Gastrocnemius medialis (tissue), 4 donors: ENCODE measurements at regions of chr14 and their contacts with region 1.

Region 1: GRCh38 chr14:88013750-88014349 is 8.9 kb downstream of the GPR65 start:
- DNase-seq: peak; percentile 29 to 53
- ATAC-seq: peak; percentile 78 to 90
- H3K4me3 ChIP-seq: no peak overlapping the region
- H3K27ac ChIP-seq: no peak overlapping the region
- H3K4me1 ChIP-seq: peaks cover 0 to 5% of the 10 kb centered on the region in 2 donors
- H3K27me3 ChIP-seq: no peaks in the 10 kb centered on the region
- CTCF ChIP-seq: peak; percentile 48 to 82 (median 68)
- POLR2A ChIP-seq: no peak

Region 2: DNA sequence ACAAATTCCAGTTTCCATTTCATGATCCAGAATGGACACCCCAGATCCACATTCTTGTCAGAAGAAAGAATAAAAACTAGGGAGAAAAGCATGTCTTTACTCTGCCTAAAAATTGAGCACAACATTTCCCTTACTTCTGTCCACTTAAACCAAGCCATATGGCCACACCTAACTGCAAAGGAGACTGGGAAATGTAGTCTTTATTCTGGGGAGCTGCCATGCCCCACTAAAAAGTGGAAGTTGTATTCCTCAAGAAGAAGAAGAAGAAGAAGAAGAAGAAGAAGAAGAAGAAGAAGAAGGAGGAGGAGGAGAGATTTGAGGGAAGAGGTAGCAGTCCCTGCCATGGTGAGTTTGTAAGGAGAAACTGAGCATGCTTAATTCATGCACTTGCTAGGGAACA is 75.6 kb after region 1 on chr14:
- in situ Hi-C with region 1: no loop called
- intact Hi-C with region 1: no loop called
- DNase-seq: no peak
- ATAC-seq: no peak
- H3K4me3 ChIP-seq: no peak overlapping the region
- H3K27ac ChIP-seq: no peak overlapping the region
- H3K4me1 ChIP-seq: no peaks in the 10 kb centered on the region
- H3K27me3 ChIP-seq: no peaks in the 10 kb centered on the region
- CTCF ChIP-seq: no peak
- POLR2A ChIP-seq: no peak

Region 3: DNA sequence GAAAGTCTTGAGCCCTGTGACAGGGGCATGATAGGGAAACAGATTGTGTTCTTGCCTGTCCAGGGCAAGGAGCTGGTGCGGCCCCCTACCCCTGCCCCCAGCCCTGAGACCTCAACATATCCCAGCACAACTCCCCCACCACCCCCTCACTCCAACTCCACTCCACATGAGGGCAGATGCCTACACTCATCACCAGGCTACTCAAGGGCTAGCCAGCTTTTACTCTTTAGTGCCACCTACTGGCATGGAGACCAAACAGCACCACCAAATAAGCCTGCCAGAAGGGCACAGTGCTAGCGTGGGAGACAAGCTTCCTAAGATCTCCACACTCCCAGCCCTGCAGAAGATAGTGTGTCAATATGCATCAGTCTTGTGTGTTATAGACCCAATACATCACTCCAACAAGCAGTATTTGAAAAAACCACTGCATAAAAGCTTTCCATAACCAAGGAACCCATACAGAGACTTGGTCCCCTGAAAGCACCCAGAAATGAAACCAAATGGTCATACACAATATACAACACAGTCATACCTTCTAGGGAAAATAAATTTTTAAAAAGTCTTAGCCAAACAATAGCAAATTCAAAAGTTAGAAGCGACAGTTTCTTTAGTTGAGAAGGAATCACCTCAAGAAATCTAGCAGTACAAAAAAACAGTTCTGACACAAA is 154.8 kb after region 1 on chr14:
- in situ Hi-C with region 1: no loop called
- intact Hi-C with region 1: loop called (anchors 5 kb)
- DNase-seq: no peak
- ATAC-seq: no peak
- H3K4me3 ChIP-seq: no peak overlapping the region
- H3K27ac ChIP-seq: no peak overlapping the region
- H3K4me1 ChIP-seq: no peaks in the 10 kb centered on the region
- H3K27me3 ChIP-seq: no peaks in the 10 kb centered on the region
- CTCF ChIP-seq: peak in 3 of 5 experiments; percentile 29 to 57 (median 38)
- POLR2A ChIP-seq: no peak

Region 4: DNA sequence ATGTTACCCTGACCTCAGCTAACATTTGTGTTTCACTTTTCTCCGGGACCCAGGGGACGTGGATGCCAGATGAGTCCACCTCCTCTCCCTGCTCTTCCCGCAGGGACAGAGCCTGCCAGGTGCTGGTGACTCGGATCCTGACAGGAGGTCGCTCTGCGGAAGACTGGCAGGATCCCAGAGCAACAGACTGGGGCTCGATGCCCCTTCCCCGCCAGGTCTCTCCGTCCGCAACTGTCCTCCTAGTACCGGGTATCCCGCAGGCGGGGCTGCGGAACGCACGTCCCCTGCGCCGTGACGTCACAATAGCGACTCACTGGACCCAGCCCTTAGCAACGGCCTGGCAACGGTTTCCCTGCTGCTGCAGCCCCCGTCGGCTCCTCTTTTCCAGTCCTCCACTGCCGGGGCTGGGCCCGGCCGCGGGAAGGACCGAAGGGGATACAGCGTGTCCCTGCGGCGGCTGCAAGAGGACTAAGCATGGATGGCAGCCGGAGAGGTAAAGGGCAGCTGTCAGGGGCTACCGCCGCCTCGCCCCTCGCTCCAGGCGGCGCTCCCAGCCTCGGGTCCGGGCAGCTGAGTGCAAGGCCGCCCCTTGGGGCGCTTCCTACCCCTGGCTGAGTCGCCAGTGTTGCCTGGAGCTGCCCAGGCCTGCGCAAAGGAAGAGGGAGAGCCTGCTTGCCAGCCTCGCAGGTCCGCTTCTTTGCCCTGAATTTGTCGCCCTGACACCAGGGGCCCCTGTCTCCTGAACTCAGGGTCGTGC is 371.7 kb after region 1 on chr14 and contains the start of gene SPATA7:
- in situ Hi-C with region 1: loop called in 1 of 4 experiments (anchors 25 kb)
- intact Hi-C with region 1: no loop called
- DNase-seq: peak; percentile 80 to 84
- ATAC-seq: peak; percentile 93 to 98
- H3K4me3 ChIP-seq: peak within 1 kb of the TSS; percentile 83 to 98 (median 91)
- H3K27ac ChIP-seq: peak within 1 kb of the TSS; percentile 71 to 82 (median 77)
- H3K4me1 ChIP-seq: peaks cover 13% of the 10 kb centered on the region in 2 donors
- H3K27me3 ChIP-seq: no peaks in the 10 kb centered on the region
- CTCF ChIP-seq: no peak
- POLR2A ChIP-seq: peak; percentile 51 to 53
- total RNA-seq, gene SPATA7: 7.2 to 11.2 (median 10.1) TPM